ENCODE measurements at regions of chr10 and their contacts with region 1.

Region 1: DNA sequence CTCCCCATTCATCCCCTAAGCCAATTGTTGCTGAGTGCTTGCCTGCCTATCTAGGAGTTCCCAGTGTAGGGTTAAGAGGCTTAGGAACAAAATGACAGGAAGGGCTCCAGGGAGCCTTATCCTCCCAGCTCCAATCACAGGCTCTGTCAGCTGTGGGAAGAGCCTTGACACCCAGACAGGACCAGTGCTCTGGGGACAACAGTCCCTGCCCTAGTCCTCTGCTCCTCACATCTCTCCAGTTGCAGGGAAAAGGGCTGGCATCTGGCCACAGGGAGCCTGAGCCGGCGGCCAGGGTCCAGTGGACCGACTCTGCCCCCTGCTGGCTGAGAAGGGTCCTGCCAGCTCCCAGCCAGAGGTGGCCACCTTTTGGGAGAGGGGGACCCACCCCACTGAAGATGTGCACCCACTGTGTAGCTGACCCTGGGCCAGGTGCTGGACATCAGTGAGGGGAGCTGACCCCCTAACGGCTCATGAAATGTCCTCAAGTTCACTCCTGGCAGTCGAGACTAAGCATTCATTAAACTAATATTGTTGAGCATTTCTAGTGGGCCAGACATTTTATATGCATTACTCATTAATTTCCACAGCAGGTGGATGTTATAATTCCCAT is 17.6 kb downstream of the DNAJB12 start:
- DNase-seq: peak in 8 of 9 experiments; percentile 46 to 85 (median 72)
- ATAC-seq: no peak
- H3K4me3 ChIP-seq: no peak overlapping the region
- H3K4me3 Mint-ChIP-seq: no peak overlapping the region
- H3K27ac ChIP-seq: no peak overlapping the region
- H3K27ac Mint-ChIP-seq: peak overlapping the region; percentile 66
- H3K4me1 ChIP-seq: peaks cover 55% of the 10 kb centered on the region
- H3K4me1 Mint-ChIP-seq: peaks cover 55% of the 10 kb centered on the region
- H3K27me3 ChIP-seq: no peaks in the 10 kb centered on the region
- H3K27me3 Mint-ChIP-seq: no peaks in the 10 kb centered on the region
- CTCF ChIP-seq: peak; percentile 96

Region 2: GRCh38 chr10:71957546-71958275 is 379.4 kb before region 1 on chr10:
- CTCF ChIA-PET with region 1: interaction called, 3 read pairs
- POLR2A ChIA-PET with region 1: no interaction called
- intact Hi-C with region 1: loop called in 1 of 2 experiments (anchors 5 kb)
- DNase-seq: no peak
- ATAC-seq: no peak
- H3K4me3 ChIP-seq: no peak overlapping the region
- H3K4me3 Mint-ChIP-seq: no peak overlapping the region
- H3K27ac ChIP-seq: no peak overlapping the region
- H3K27ac Mint-ChIP-seq: no peak overlapping the region
- H3K4me1 ChIP-seq: no peaks in the 10 kb centered on the region
- H3K4me1 Mint-ChIP-seq: no peaks in the 10 kb centered on the region
- H3K27me3 ChIP-seq: peaks cover 0 to 2% of the 10 kb centered on the region in 2 experiments
- H3K27me3 Mint-ChIP-seq: peaks cover 14% of the 10 kb centered on the region
- CTCF ChIP-seq: no peak

Region 3: DNA sequence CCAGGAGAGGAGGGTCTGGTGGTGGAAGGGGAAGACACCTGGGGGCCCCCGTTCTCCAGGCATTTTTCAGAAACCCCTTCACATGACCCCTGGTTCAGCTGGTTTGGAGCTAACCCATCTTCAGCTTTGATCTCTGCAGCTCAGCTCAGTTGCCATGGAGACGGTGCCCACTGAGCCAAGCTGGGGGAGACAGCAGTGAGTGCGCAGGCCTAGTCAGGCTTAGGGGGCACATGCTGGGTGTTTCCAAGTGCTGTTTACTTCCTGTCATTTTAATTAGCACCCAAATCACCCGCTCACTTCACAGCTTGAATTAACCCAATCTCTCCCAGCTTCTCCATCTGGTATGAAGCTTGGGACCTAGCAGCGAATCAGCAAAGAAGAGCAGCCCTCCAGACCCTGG is 257.8 kb before region 1 on chr10:
- CTCF ChIA-PET with region 1: interaction called, 12 read pairs
- POLR2A ChIA-PET with region 1: interaction called, 5 read pairs
- intact Hi-C with region 1: no loop called
- DNase-seq: peak; percentile 69 to 97 (median 88)
- ATAC-seq: peak; percentile 63
- H3K4me3 ChIP-seq: peak overlapping the region; percentile 32 to 36
- H3K4me3 Mint-ChIP-seq: peak overlapping the region; percentile 97
- H3K27ac ChIP-seq: peak overlapping the region; percentile 49 to 69
- H3K27ac Mint-ChIP-seq: peak overlapping the region; percentile 97
- H3K4me1 ChIP-seq: peaks cover 96% of the 10 kb centered on the region
- H3K4me1 Mint-ChIP-seq: peaks cover 94% of the 10 kb centered on the region
- H3K27me3 ChIP-seq: no peaks in the 10 kb centered on the region
- H3K27me3 Mint-ChIP-seq: no peaks in the 10 kb centered on the region
- CTCF ChIP-seq: no peak

Region 4: DNA sequence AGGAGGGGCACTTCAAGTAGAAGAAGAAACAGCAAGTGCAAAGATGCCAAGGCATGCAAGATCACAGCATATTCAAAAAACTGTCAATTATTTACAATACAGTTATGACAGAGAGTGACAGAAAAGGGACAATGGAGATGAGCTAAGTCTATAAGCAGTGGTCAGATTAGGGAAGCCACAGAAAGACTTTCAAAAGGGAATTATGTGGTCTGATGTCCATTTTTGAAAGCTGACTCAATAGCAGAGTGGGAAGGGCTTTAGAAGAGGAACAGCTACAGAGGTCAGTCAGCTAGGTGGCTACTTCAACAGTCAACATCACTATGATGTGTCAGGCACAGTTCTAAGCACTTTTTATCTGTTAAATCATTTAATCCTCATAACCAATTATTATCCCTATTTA is 203.6 kb before region 1 on chr10:
- CTCF ChIA-PET with region 1: interaction called, 84 read pairs
- POLR2A ChIA-PET with region 1: interaction called, 4 read pairs
- intact Hi-C with region 1: loop called (anchors 1 kb)
- DNase-seq: no peak
- ATAC-seq: no peak
- H3K4me3 ChIP-seq: no peak overlapping the region
- H3K4me3 Mint-ChIP-seq: no peak overlapping the region
- H3K27ac ChIP-seq: no peak overlapping the region
- H3K27ac Mint-ChIP-seq: peak overlapping the region; percentile 30
- H3K4me1 ChIP-seq: peaks cover 41% of the 10 kb centered on the region
- H3K4me1 Mint-ChIP-seq: peaks cover 43% of the 10 kb centered on the region
- H3K27me3 ChIP-seq: no peaks in the 10 kb centered on the region
- H3K27me3 Mint-ChIP-seq: no peaks in the 10 kb centered on the region
- CTCF ChIP-seq: no peak

Region 5: GRCh38 chr10:72223743-72224101 is 113.4 kb before region 1 on chr10:
- CTCF ChIA-PET with region 1: interaction called, 30 read pairs
- POLR2A ChIA-PET with region 1: interaction called, 7 read pairs
- intact Hi-C with region 1: loop called in 1 of 2 experiments (anchors 1 kb)
- DNase-seq: no peak
- ATAC-seq: no peak
- H3K4me3 ChIP-seq: no peak overlapping the region
- H3K4me3 Mint-ChIP-seq: no peak overlapping the region
- H3K27ac ChIP-seq: no peak overlapping the region
- H3K27ac Mint-ChIP-seq: peak overlapping the region; percentile 39
- H3K4me1 ChIP-seq: peaks cover 61% of the 10 kb centered on the region
- H3K4me1 Mint-ChIP-seq: peaks cover 59% of the 10 kb centered on the region
- H3K27me3 ChIP-seq: no peaks in the 10 kb centered on the region
- H3K27me3 Mint-ChIP-seq: no peaks in the 10 kb centered on the region
- CTCF ChIP-seq: no peak

Region 6: DNA sequence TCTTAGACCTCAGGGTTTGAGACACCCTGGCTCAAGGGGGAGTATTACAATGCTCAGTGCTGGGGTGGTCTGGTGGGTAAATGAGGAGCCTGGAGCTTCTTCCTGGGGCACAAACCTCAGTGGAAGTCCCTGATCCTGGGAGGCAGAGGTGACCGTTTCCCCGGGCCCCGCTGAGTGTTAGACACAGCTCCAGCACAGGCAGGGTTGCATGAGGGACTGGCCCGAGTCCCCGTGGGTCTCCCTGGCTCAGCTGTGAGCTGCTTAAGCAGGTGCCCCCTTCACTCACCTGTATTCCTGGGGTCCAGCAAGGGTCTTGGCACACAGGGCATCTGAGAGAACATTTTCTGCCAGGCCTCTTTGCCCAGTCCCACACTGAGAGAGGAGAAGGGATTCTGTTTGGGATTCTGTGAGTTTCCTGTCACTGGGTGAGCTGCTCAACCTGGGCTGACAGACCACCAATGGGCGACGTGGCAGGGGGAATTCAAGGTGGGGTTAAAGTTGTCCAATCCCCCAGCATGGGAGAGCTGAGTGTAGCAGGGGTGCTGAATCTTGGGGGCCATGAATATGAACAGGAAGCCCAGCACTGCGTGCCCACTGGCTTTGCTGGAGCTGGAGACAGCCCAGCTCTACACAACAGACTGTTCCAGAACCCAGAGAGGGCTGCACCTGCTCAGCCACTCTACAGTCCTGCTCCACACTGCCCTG is 33.5 kb before region 1 on chr10:
- CTCF ChIA-PET with region 1: interaction called, 17 read pairs
- POLR2A ChIA-PET with region 1: no interaction called
- intact Hi-C with region 1: no loop called
- DNase-seq: no peak
- ATAC-seq: no peak
- H3K4me3 ChIP-seq: no peak overlapping the region
- H3K4me3 Mint-ChIP-seq: no peak overlapping the region
- H3K27ac ChIP-seq: no peak overlapping the region
- H3K27ac Mint-ChIP-seq: peak overlapping the region; percentile 25
- H3K4me1 ChIP-seq: peaks cover 31% of the 10 kb centered on the region
- H3K4me1 Mint-ChIP-seq: peaks cover 36% of the 10 kb centered on the region
- H3K27me3 ChIP-seq: no peaks in the 10 kb centered on the region
- H3K27me3 Mint-ChIP-seq: no peaks in the 10 kb centered on the region
- CTCF ChIP-seq: no peak

Region 7: DNA sequence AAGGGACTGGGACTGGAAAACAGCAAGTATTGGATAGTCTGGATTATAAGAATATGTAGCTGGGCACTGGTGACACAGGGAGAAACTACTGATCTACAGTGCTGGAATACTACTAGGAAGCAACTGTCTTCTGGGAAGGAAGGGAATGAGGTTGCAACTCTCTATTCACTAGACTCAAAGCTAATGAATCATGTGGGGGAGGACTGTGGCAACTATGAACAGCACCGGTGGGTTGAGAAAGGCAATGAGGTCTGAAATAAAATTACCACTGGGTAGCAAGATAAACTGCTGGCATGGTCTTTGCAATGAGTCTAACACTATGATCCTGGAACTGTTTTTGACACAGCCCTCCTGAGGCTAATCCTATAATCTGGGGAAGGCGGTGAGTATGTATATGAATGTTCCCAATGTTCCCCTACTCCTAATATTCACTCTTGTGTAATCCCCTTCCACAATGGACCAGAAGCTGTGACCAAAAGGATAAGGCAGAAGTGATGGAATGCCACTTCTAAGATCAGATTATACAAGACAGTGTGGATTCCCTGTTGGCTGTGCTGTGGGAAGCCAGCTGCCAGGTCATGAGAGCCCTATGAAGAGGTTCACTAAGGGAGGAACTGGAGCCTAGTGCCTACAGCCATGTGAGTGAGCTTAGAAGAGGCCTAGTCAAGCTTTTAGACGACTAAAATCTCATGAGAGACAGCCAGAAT is 118.9 kb after region 1 on chr10:
- CTCF ChIA-PET with region 1: no interaction called
- POLR2A ChIA-PET with region 1: no interaction called
- intact Hi-C with region 1: no loop called
- DNase-seq: no peak
- ATAC-seq: no peak
- H3K4me3 ChIP-seq: no peak overlapping the region
- H3K4me3 Mint-ChIP-seq: no peak overlapping the region
- H3K27ac ChIP-seq: no peak overlapping the region
- H3K27ac Mint-ChIP-seq: no peak overlapping the region
- H3K4me1 ChIP-seq: no peaks in the 10 kb centered on the region
- H3K4me1 Mint-ChIP-seq: no peaks in the 10 kb centered on the region
- H3K27me3 ChIP-seq: no peaks in the 10 kb centered on the region
- H3K27me3 Mint-ChIP-seq: no peaks in the 10 kb centered on the region
- CTCF ChIP-seq: no peak

Measured in CD8-positive, alpha-beta T cell (primary cell).